ENCODE measurements at regions of chr5 and their contacts with region 1.

Region 1: GRCh38 chr5:75885849-75886598 is 168.8 kb upstream of the POC5 start:
- DNase-seq: no peak
- ATAC-seq: no peak
- H3K4me3 ChIP-seq: no peak overlapping the region
- H3K27ac ChIP-seq: no peak overlapping the region
- H3K4me1 ChIP-seq: no peaks in the 10 kb centered on the region
- H3K27me3 ChIP-seq: no peaks in the 10 kb centered on the region
- CTCF ChIP-seq: peak; percentile 54

Region 2: GRCh38 chr5:76256116-76256889 is 370.3 kb after region 1 on chr5:
- CTCF ChIA-PET with region 1: no interaction called
- POLR2A ChIA-PET with region 1: no interaction called
- in situ Hi-C with region 1: no loop called
- intact Hi-C with region 1: loop called (anchors 10 kb)
- DNase-seq: peak; percentile 42
- ATAC-seq: peak; percentile 97
- H3K4me3 ChIP-seq: no peak overlapping the region
- H3K27ac ChIP-seq: no peak overlapping the region
- H3K4me1 ChIP-seq: no peaks in the 10 kb centered on the region
- H3K27me3 ChIP-seq: peaks cover 17% of the 10 kb centered on the region
- CTCF ChIP-seq: peak; percentile 85